ENCODE measurements at regions of chr1 and their contacts with region 1.

Region 1: GRCh38 chr1:233394860-233395717 is 67.6 kb downstream of the MAP3K21 start:
- DNase-seq: peak; percentile 47
- CTCF ChIP-seq: peak; percentile 53

Region 2: GRCh38 chr1:233341117-233341516 is 54.0 kb before region 1 on chr1:
- in situ Hi-C with region 1: no loop called
- DNase-seq: no peak
- CTCF ChIP-seq: no peak

Region 3: DNA sequence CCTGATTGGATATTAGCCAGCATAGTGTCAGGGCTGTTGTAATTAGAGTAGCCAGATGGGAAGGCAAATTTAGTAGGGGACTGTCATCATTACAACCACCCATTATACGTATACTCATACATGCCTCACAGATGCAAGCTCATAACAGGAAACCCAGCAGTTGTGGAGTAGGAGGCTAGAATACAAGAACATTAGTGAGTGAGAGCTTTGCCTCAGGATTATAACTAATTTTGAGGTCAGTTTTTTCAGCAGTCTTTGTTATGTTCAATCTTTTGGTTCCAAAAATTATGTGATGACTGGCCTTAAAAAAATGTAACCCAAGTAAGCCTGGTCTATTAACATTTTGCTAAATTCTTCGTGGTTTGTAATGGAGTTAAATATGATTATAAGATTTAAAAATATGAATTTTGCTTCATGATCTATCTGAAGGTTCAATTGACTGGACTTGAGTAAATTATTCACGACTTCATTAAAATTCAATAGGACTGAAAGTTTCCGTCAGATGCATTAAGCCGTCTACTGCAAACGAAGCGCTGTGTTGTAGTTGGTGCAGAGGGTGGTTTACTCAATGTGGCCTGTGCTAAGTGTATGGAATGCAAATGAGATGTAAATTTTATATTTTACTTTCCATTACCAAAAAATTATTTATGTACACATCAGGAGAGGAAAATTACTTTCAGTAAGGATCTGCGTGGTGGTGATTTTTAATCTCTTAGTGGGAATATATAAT is 267.7 kb after region 1 on chr1:
- in situ Hi-C with region 1: no loop called
- DNase-seq: no peak
- CTCF ChIP-seq: no peak

Region 4: GRCh38 chr1:234065794-234066447 is 670.8 kb after region 1 on chr1:
- in situ Hi-C with region 1: loop called (anchors 10 kb)
- DNase-seq: peak; percentile 66
- CTCF ChIP-seq: peak; percentile 88

Measured in GM13976 (cell line).